ENCODE measurements at regions of chr7 and their contacts with region 1.

Region 1: DNA sequence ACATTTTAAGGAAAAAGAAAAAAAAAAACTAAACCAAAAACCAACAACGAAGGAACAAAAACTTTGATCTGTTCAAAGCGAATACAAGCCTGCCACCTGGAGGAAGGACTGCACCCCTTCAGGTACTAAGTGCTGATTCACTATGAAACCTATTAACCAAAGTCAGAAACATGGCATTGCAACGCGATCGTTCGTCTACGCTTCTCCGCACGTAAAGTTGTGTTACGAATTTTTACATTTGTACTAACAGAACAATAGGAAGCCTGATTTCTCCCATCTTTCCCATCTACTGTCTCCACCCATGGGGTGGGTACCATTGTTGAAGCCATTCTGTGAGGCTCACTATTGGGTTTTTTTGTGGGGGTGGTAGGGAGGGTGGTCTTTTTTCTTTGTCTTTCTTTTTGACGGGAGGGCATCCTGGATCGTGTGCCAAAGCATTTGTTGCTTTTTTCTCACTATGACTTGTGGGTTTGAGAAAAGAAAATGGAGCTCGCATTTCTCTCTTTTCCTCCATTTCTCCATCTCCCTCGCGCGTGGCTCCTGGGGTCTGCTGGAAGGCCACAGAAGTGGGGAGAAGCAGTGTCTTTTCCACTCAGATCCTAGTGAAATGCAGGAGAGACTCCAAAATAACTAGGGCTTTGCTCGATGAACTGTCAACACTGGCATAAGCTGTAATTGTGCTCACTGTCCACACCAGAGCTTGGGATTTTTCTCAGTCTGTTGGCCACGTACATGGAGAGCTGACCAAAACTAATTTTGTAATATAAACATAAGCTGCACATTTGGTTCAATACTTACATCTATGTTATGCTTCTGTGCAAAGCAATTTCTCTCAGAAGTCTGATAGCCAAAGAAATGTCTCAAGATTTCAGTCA is 100.9 kb upstream of the YAE1 start:
- DNase-seq: peak in 1 of 5 donors; percentile 31
- ATAC-seq: peak in 3 of 4 donors; percentile 52 to 78 (median 76)
- H3K4me3 ChIP-seq: peak overlapping the region in 1 of 12 donors; percentile 9
- H3K27ac ChIP-seq: no peak overlapping the region
- H3K4me1 ChIP-seq: peaks cover 0 to 5% (median 0%) of the 10 kb centered on the region in 12 donors
- H3K27me3 ChIP-seq: peaks cover 0 to 9% (median 0%) of the 10 kb centered on the region in 9 donors
- CTCF ChIP-seq: peak; percentile 52 to 81 (median 72)
- POLR2A ChIP-seq: no peak

Region 2: DNA sequence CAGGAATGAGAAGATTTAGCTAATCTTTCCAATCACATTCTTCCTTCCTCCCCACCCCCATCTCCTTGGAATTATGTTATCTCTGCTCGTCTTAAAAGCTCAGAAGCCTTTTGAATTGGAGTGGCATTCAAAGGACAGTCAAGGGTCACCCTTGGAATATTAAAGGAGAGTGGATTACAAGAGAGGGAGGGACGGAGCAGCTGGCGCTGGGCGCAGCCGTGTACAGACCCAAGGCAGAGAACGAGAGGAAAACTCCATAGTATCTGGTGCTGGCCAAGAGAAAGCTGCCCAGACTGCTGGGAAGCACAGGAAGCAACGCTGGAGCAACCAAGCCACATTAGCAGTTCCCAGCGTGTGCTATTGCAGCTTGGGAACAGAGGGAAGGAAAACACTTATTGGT is 391.9 kb before region 1 on chr7:
- intact Hi-C with region 1: loop called in 1 of 10 experiments (anchors 10 kb)
- DNase-seq: peak in 1 of 5 donors; percentile 22
- ATAC-seq: peak in 2 of 4 donors; percentile 46 to 49
- H3K4me3 ChIP-seq: no peak overlapping the region
- H3K27ac ChIP-seq: no peak overlapping the region
- H3K4me1 ChIP-seq: peaks cover 0 to 4% (median 0%) of the 10 kb centered on the region in 12 donors
- H3K27me3 ChIP-seq: no peaks in the 10 kb centered on the region
- CTCF ChIP-seq: no peak
- POLR2A ChIP-seq: no peak

Region 3: GRCh38 chr7:39341083-39341482 is 124.2 kb before region 1 on chr7:
- intact Hi-C with region 1: no loop called
- DNase-seq: no peak
- ATAC-seq: peak in 2 of 4 donors; percentile 34 to 50
- H3K4me3 ChIP-seq: no peak overlapping the region
- H3K27ac ChIP-seq: no peak overlapping the region
- H3K4me1 ChIP-seq: peaks cover 0 to 4% (median 0%) of the 10 kb centered on the region in 12 donors
- H3K27me3 ChIP-seq: peaks cover 0 to 6% (median 0%) of the 10 kb centered on the region in 9 donors
- CTCF ChIP-seq: no peak
- POLR2A ChIP-seq: no peak

Region 4: GRCh38 chr7:39577229-39577874 is 112.1 kb after region 1 on chr7:
- intact Hi-C with region 1: no loop called
- DNase-seq: no peak
- ATAC-seq: peak in 1 of 4 donors; percentile 28
- H3K4me3 ChIP-seq: no peak overlapping the region
- H3K27ac ChIP-seq: no peak overlapping the region
- H3K4me1 ChIP-seq: peaks cover 0 to 4% (median 0%) of the 10 kb centered on the region in 12 donors
- H3K27me3 ChIP-seq: no peaks in the 10 kb centered on the region
- CTCF ChIP-seq: no peak
- POLR2A ChIP-seq: no peak